ENCODE measurements at regions of chr14 and their contacts with region 1.

Region 1: GRCh38 chr14:94485944-94486841 is 10.2 kb upstream of the SERPINA9 start:
- DNase-seq: peak; percentile 46
- ATAC-seq: peak; percentile 91
- H3K4me3 ChIP-seq: no peak overlapping the region
- H3K27ac ChIP-seq: no peak overlapping the region
- H3K4me1 ChIP-seq: no peaks in the 10 kb centered on the region; the same call in 1 of the 2 replicates
- H3K27me3 ChIP-seq: peaks cover 10% of the 10 kb centered on the region
- CTCF ChIP-seq: peak; percentile 94
- POLR2A ChIP-seq: no peak
- RAD21 ChIP-seq: peak; percentile 83

Region 2: GRCh38 chr14:94129111-94129757 is 357.0 kb before region 1 on chr14 and contains the start of gene IFI27L2:
- CTCF ChIA-PET with region 1: no interaction called
- POLR2A ChIA-PET with region 1: no interaction called
- dilution Hi-C with region 1: no loop called
- in situ Hi-C with region 1: no loop called
- intact Hi-C with region 1: loop called (anchors 5 kb)
- DNase-seq: peak; percentile 73
- ATAC-seq: peak; percentile 96
- H3K4me3 ChIP-seq: peak within 1 kb of the TSS; percentile 92
- H3K27ac ChIP-seq: peak within 1 kb of the TSS; percentile 91
- H3K4me1 ChIP-seq: peaks cover 5% of the 10 kb centered on the region
- H3K27me3 ChIP-seq: no peaks in the 10 kb centered on the region
- CTCF ChIP-seq: peak; percentile 21
- POLR2A ChIP-seq: no peak; the same call in 1 of the 2 replicates
- RAD21 ChIP-seq: no peak
- total RNA-seq, gene IFI27L2: 43.0 and 111 TPM in 2 replicates

Region 3: DNA sequence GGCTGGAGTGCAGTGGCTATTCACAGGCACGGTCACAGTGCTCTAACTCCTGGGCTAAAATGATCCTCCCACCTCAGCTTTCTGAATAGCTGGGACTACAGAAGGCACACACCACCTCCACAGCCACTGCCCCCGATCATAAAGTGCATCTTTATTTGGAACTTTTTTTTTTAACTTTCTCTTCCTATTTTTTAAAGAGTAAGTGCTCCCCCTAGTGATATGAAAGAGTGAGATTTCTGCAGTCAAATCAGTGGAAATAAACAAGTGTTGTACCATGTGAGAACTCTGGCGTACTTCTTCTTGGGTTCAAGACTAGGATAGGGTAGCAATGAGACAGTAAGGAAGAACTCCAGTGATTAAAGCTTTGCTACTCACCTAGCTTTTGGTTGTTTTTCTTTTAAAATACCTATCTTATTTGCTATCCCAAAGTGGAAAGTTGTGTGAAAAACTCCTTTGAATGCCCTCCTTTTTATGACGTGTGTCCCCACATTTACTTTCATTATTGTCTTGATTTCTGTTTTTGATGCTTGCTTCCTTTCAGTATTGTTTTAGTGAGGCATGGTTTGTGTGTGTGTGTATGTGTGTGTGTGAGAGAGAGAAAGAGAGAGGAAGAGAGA is 305.4 kb before region 1 on chr14:
- CTCF ChIA-PET with region 1: interaction called, 4 read pairs
- POLR2A ChIA-PET with region 1: no interaction called
- dilution Hi-C with region 1: no loop called
- in situ Hi-C with region 1: no loop called
- intact Hi-C with region 1: loop called (anchors 10 kb)
- DNase-seq: peak; percentile 42
- ATAC-seq: peak; percentile 59; the same call in 1 of the 2 replicates
- H3K4me3 ChIP-seq: no peak overlapping the region
- H3K27ac ChIP-seq: no peak overlapping the region
- H3K4me1 ChIP-seq: no peaks in the 10 kb centered on the region
- H3K27me3 ChIP-seq: peaks cover 10% of the 10 kb centered on the region
- CTCF ChIP-seq: peak; percentile 66
- POLR2A ChIP-seq: no peak
- RAD21 ChIP-seq: peak; percentile 47

Region 4: GRCh38 chr14:94244182-94244581 is 242.0 kb before region 1 on chr14:
- CTCF ChIA-PET with region 1: no interaction called
- POLR2A ChIA-PET with region 1: no interaction called
- dilution Hi-C with region 1: no loop called
- in situ Hi-C with region 1: no loop called
- intact Hi-C with region 1: no loop called
- DNase-seq: no peak
- ATAC-seq: no peak
- H3K4me3 ChIP-seq: no peak overlapping the region
- H3K27ac ChIP-seq: no peak overlapping the region
- H3K4me1 ChIP-seq: no peaks in the 10 kb centered on the region
- H3K27me3 ChIP-seq: no peaks in the 10 kb centered on the region
- CTCF ChIP-seq: no peak
- POLR2A ChIP-seq: no peak
- RAD21 ChIP-seq: no peak

Region 5: GRCh38 chr14:94355191-94355797 is 130.9 kb before region 1 on chr14:
- CTCF ChIA-PET with region 1: interaction called, 5 read pairs
- POLR2A ChIA-PET with region 1: no interaction called
- dilution Hi-C with region 1: no loop called
- in situ Hi-C with region 1: no loop called
- intact Hi-C with region 1: loop called (anchors 1 kb)
- DNase-seq: peak; percentile 65
- ATAC-seq: peak; percentile 93
- H3K4me3 ChIP-seq: no peak overlapping the region
- H3K27ac ChIP-seq: no peak overlapping the region
- H3K4me1 ChIP-seq: 0 out of 2 replicates have a peak, but pooled peaks cover 2% of the 10 kb centered on the region
- H3K27me3 ChIP-seq: no peaks in the 10 kb centered on the region
- CTCF ChIP-seq: peak; percentile 52
- POLR2A ChIP-seq: no peak
- RAD21 ChIP-seq: peak; percentile 67

Region 6: DNA sequence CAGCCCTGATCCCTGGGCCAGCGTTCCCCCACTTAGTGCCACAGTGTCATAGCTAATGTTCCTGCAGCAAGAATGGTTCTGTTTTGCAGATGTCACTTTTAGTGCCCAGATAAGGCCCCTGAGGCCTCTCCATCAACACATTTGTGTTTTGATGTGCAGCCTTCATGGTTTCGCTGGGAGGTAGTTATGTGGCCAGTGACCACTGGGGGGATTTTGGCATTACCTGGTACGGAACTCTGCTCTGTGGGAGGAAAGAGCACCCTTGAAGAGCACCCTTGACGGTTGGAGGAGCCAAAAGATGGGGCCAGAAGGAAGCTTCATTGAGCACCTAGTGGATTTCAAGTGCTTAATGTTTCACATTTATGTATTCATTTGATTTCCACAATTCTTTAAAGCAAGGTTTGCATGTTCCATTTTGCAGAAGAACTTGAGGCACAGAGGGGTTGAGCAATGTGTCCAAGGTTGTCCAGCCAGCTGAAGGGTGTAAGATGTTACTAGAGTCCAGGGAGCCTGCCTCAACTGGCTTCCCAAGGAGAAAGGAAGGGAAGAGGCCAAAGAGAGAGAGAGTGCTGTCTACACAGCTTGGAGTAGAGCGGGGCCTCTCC is 46.6 kb before region 1 on chr14:
- CTCF ChIA-PET with region 1: interaction called, 3 read pairs
- POLR2A ChIA-PET with region 1: no interaction called
- dilution Hi-C with region 1: no loop called
- in situ Hi-C with region 1: no loop called
- intact Hi-C with region 1: loop called (anchors 1 kb)
- DNase-seq: no peak
- ATAC-seq: no peak
- H3K4me3 ChIP-seq: no peak overlapping the region
- H3K27ac ChIP-seq: no peak overlapping the region
- H3K4me1 ChIP-seq: no peaks in the 10 kb centered on the region
- H3K27me3 ChIP-seq: no peaks in the 10 kb centered on the region
- CTCF ChIP-seq: no peak
- POLR2A ChIP-seq: no peak
- RAD21 ChIP-seq: no peak

Region 7: DNA sequence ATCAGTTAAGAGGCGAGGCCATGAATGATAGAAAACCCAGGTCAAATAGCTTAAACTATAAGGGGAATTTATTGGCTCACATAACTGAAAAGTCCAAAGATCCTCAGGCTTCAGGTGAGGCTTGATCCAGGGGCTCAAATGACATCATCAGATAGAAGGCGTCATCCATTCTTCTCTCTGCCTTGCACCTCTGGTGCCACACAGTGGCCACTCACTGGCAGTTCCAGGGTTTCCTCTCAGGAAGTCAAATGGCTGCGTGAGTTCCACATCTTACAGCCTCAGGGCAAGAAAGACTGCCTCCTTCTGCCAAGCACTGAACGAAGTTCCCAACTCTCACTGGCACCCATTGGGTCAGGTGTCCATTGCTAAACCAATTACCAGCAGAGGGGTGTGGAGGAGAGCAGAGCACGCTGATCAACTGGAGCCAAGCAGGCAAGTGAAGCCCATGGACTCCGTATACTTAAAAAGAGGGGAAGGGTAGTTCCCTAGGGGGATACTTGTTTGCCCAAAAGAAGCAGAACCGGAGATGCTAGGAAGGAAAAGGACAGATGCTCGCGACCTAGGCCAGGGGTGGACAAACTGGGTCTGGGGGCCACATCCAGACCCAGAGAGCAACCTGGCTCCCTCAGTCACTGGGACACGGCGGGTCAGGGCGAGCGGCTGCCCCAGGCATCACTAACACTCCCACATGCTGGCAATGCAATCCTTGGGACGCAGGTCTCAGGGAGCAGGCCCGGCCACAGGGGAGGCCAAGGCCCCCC is 195.3 kb after region 1 on chr14:
- CTCF ChIA-PET with region 1: no interaction called
- POLR2A ChIA-PET with region 1: no interaction called
- dilution Hi-C with region 1: no loop called
- in situ Hi-C with region 1: no loop called
- intact Hi-C with region 1: loop called (anchors 1 kb)
- DNase-seq: peak; percentile 42
- ATAC-seq: peak; percentile 64
- H3K4me3 ChIP-seq: no peak overlapping the region
- H3K27ac ChIP-seq: no peak overlapping the region
- H3K4me1 ChIP-seq: no peaks in the 10 kb centered on the region
- H3K27me3 ChIP-seq: peaks cover 2% of the 10 kb centered on the region
- CTCF ChIP-seq: peak; percentile 65
- POLR2A ChIP-seq: no peak
- RAD21 ChIP-seq: peak; percentile 77

Region 8: DNA sequence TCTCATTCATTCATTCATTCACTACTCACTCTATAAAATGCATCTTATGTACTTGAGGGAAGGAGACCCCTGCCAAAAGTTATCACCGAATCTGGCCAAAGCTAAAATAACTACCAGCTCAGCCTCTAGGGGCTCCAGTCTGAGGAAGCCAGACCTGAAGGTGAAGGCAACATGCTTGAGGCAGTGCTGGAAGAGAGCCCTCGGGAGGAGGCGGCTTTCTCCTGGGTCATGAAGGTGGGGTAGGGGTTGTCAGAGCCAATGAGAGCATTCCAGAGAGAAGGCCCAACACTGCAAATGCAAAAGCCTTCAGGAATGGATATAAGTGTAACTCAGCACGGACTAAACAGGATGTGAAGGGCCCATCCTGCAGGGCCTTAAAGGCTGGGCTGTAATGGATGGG is 221.3 kb after region 1 on chr14:
- CTCF ChIA-PET with region 1: no interaction called
- POLR2A ChIA-PET with region 1: no interaction called
- dilution Hi-C with region 1: no loop called
- in situ Hi-C with region 1: no loop called
- intact Hi-C with region 1: no loop called
- DNase-seq: no peak
- ATAC-seq: no peak
- H3K4me3 ChIP-seq: no peak overlapping the region
- H3K27ac ChIP-seq: no peak overlapping the region
- H3K4me1 ChIP-seq: no peaks in the 10 kb centered on the region
- H3K27me3 ChIP-seq: peaks cover 2% of the 10 kb centered on the region; the same call in 1 of the 2 replicates
- CTCF ChIP-seq: no peak
- POLR2A ChIP-seq: no peak
- RAD21 ChIP-seq: no peak